PC-9 (cell line): ENCODE measurements at regions of chr16 and their contacts with region 1.

Region 1: GRCh38 chr16:80707686-80708085 is 96.7 kb downstream of the CDYL2 start:
- DNase-seq: no peak
- H3K4me3 ChIP-seq: no peak overlapping the region
- H3K27ac ChIP-seq: no peak overlapping the region
- H3K4me1 ChIP-seq: no peaks in the 10 kb centered on the region
- H3K27me3 ChIP-seq: no peaks in the 10 kb centered on the region
- CTCF ChIP-seq: no peak

Region 2: DNA sequence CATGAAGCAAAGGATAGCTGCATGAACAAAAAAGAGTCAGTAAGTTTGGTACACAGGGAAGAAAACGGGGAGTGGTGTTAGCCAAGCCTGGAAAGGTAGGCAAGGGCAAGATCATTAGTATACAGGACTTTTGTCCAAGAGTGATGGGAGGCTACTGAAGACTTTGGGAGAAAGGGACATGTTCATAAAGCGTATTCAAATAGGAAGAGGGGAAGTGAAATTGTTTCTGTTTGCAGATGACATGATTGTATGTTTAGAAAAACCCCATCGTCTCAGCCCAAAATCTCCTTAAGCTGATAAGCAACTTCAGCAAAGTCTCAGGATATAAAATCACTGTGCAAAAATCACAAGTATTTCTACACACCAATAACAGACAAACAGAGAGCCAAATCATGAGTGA is 77.3 kb after region 1 on chr16:
- CTCF ChIA-PET with region 1: no interaction called
- POLR2A ChIA-PET with region 1: no interaction called
- intact Hi-C with region 1: loop called (anchors 2 kb)
- DNase-seq: no peak
- H3K4me3 ChIP-seq: no peak overlapping the region
- H3K27ac ChIP-seq: no peak overlapping the region
- H3K4me1 ChIP-seq: no peaks in the 10 kb centered on the region
- H3K27me3 ChIP-seq: no peaks in the 10 kb centered on the region; the same call in 1 of the 2 replicates
- CTCF ChIP-seq: no peak

Region 3: GRCh38 chr16:80836837-80837236 is 129.2 kb after region 1 on chr16:
- CTCF ChIA-PET with region 1: no interaction called
- POLR2A ChIA-PET with region 1: no interaction called
- intact Hi-C with region 1: no loop called
- DNase-seq: no peak
- H3K4me3 ChIP-seq: no peak overlapping the region
- H3K27ac ChIP-seq: no peak overlapping the region
- H3K4me1 ChIP-seq: no peaks in the 10 kb centered on the region
- H3K27me3 ChIP-seq: peaks cover 39% of the 10 kb centered on the region
- CTCF ChIP-seq: no peak